ENCODE measurements at regions of chr7 and their contacts with region 1.

Region 1: GRCh38 chr7:120805636-120806388 is 52.1 kb downstream of the TSPAN12 start:
- DNase-seq: no peak
- H3K4me3 ChIP-seq: no peak overlapping the region
- CTCF ChIP-seq: peak; percentile 78

Region 2: GRCh38 chr7:120941064-120941463 is 135.3 kb after region 1 on chr7:
- CTCF ChIA-PET with region 1: interaction called, 21 read pairs
- POLR2A ChIA-PET with region 1: no interaction called
- DNase-seq: no peak
- H3K4me3 ChIP-seq: no peak overlapping the region
- CTCF ChIP-seq: no peak

Region 3: DNA sequence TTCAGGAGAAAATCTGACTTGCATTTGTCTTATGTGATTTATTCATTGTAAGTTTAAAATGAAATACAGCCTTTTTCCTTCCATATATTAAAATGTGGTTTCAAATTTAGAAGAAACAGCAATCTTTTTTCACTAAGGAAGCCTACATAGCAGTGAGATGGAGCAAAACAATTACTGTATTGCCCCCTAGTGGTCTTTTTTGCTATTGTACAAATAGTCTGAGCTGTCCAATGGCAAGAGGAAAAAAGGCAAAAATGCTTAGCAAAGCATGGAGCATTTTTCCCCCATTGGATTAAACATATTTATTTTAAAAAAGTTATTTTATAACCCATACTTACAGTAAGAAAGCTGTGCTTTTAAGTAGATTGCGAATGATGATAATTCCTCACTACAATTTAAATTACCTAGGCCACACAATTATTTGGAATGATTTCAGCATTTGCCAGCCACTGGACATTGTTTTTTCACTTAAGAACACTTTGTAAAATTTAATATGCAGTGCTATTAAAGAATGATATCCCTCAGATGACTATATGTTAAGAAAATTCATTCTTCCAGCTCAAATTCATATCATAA is 302.2 kb after region 1 on chr7:
- CTCF ChIA-PET with region 1: interaction called, 49 read pairs
- POLR2A ChIA-PET with region 1: no interaction called
- DNase-seq: peak; percentile 19
- H3K4me3 ChIP-seq: no peak overlapping the region
- CTCF ChIP-seq: peak; percentile 43

Region 4: DNA sequence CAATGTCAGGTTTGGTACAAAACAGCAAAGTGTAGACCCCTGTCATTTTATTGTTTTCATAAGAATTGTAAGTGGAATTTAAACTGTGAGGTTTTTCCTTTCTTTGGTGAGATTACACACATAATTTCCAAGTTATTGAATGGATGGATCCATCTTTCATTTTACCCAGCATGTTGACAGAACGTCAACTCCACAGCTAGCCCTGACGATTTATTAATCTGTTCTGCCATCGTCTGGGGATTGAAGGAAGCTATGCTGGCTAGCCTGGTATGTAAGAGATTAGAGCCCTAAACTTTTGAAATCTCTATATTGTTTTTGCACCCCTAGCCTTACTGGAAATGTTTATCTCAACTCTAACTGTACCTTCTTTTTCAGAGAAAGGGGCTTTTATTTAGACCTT is 531.6 kb after region 1 on chr7:
- CTCF ChIA-PET with region 1: interaction called, 10 read pairs
- POLR2A ChIA-PET with region 1: no interaction called
- DNase-seq: no peak
- H3K4me3 ChIP-seq: no peak overlapping the region
- CTCF ChIP-seq: peak; percentile 28

Measured in AG04449 (cell line).